Mammary epithelial cell (primary cell): ENCODE measurements at regions of chr14 and their contacts with region 1.

Region 1: DNA sequence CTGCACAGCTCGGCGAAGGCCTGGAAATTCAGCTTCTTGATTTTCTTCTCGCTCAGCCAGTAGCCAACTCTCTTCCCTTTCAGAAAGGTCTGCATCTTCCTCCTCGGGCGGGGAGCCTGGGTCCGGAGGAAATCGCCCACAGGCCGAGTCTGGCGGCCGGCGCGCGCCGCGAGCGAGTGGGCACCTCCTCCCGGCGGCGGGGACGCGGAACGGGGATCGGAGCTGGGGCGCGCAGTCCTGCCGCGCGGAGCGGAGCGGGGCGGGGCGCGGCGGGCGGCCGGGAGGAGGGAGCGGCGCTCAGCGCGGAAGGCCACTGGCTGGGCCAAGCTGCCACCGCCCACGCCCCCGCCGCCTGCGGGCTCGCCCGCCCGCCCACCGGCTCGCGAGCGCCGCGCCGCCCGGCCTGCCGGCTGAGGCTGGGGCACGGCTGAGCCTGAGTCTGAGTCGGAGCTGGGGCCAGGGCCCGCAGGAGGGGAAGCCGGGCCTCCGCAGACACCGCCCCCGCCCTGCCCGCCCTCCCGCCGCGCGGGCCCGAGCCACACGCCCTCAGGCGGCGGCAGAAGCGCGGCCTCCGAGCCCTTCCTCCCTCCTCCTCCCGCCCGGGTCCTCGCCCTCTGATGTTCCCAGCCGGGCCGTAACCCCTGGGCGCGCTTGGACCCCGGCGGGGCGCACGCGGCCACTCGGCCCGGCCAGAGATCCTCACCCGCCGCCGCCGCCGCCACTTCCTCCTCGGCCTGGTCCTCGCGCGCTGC is 480 bp downstream of the ITPK1 start:
- DNase-seq: peak; percentile 84
- H3K4me3 ChIP-seq: peak overlapping the region; percentile 62 to 99 (median 74)
- H3K27ac ChIP-seq: peak overlapping the region; percentile 4
- H3K4me1 ChIP-seq: peaks cover 21% of the 10 kb centered on the region
- H3K27me3 ChIP-seq: no peaks in the 10 kb centered on the region
- CTCF ChIP-seq: no peak

Region 2: DNA sequence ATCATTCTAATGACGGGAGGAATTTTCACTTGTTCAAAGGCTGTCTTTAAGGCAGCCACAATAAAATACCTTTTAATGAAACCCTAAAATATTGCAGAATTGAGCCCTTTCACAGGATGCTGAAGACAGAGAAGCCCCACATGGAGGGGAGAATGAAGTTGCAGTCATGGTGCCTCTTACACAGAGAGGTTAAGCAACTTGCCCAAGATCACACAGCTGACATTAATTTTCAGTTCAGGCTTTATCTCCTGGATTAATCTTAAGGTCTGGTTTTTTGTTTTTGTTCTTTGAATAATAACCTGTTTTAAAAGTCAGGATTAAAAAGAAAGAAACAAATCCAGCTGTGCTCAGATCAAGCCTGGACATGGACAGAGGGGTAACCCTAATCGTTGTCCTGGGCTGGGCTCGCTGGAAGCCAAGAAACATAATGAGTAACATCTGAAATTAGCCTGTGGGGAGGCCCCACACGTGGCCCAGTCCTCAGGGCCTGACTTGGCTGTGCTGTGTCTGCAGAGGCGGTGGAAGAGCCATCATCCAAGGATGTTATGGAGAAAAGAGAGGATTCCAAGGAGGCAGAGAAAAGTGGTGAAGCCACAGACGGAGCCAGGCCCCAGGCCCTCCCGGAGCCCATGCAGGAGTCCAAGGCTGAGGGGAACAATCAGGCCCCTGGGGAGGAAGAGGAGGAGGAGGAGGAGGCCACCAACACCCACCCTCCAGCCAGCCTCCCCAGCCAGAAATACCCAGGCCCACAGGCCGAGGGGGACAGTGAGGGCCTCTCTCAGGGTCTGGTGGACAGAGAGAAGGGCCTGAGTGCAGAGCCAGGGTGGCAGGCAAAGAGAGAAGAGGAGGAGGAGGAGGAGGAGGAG is 184.3 kb before region 1 on chr14:
- CTCF ChIA-PET with region 1: no interaction called
- dilution Hi-C with region 1: loop called (anchors 5 kb)
- in situ Hi-C with region 1: no loop called
- intact Hi-C with region 1: no loop called
- DNase-seq: peak; percentile 75
- H3K4me3 ChIP-seq: no peak overlapping the region
- H3K27ac ChIP-seq: no peak overlapping the region
- H3K4me1 ChIP-seq: peaks cover 33% of the 10 kb centered on the region
- H3K27me3 ChIP-seq: no peaks in the 10 kb centered on the region
- CTCF ChIP-seq: no peak

Region 3: DNA sequence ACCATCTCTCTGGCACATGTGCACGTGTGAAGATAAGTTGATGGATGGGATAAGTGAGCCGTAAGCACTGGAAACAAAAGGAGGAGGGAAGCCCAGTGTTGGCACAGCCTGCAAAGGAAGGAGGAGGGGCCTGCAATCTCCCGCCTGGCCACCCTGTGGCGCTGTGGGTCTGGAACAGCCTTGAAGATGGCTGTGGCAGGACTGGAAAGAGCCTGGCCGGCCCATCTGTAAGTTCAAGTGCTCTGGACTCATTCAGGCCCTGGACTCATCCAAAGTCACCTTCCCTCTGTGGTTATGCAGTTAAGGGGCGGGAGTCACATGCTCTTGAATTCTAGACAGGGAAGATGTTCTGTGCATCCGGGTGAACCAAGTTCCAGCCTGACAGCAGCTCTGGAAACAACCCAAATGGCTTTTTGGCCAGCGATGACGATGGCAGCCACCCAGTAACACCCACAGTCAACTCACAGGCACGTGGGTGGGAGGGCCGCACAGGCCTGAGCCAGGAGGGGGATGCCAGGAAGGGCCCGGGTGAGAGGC is 141.9 kb before region 1 on chr14:
- CTCF ChIA-PET with region 1: interaction called, 6 read pairs
- dilution Hi-C with region 1: no loop called
- in situ Hi-C with region 1: loop called in 1 of 2 experiments (anchors 25 kb)
- intact Hi-C with region 1: loop called (anchors 1 kb)
- DNase-seq: peak; percentile 29
- H3K4me3 ChIP-seq: no peak overlapping the region
- H3K27ac ChIP-seq: no peak overlapping the region
- H3K4me1 ChIP-seq: peaks cover 11% of the 10 kb centered on the region
- H3K27me3 ChIP-seq: no peaks in the 10 kb centered on the region
- CTCF ChIP-seq: peak; percentile 87 to 89

Region 4: DNA sequence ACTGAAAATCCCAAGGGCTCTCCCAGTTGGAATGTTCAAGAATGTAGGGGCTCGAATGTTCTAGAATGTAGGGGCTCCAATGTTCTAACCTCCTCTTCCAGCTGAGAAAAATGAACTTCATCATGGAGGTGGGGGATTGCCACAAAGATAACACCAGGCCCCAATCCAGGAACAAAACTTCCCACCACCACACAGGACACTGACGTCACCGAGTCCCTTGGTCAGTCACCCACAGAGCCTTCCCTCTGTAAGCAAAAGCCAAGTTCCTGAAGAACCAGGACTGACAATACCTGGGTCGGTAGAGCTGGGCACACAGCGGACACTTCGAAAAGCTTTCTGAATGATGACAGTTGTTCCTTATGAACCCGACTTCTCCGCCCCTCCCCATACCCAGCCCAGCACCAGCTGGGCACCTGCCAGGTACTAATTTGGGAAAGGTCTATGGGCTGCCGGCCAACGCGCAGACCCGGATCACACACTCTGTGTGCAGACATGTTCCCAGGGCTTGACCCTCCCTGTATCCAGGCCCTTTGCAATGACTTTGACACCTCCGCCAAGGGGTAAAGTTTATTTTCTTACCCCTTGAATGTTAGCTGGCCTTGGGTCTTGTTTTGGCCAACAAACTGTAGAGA is 18.4 kb before region 1 on chr14:
- CTCF ChIA-PET with region 1: interaction called, 11 read pairs
- dilution Hi-C with region 1: no loop called
- in situ Hi-C with region 1: no loop called
- intact Hi-C with region 1: no loop called
- DNase-seq: no peak
- H3K4me3 ChIP-seq: no peak overlapping the region
- H3K27ac ChIP-seq: no peak overlapping the region
- H3K4me1 ChIP-seq: peaks cover 27% of the 10 kb centered on the region
- H3K27me3 ChIP-seq: no peaks in the 10 kb centered on the region
- CTCF ChIP-seq: no peak

Region 5: DNA sequence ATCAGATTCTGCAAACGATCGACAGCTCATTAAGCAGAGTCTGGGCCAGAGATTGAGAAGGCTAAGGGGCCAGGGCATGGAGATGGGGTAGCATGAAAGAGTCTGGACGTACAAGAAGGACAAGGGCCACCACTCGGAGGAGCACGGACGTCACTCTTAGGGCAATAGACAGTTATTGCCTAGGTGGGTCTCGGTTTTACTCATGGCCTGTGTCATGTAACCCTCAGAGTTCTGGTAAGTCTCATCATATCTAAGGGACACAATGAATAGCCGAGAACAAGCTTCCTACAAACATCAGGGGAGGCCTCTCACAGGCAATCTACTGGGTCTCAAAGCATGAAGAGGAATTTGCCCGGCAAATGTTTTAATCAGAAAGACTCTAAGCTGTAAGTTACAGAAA is 30.9 kb after region 1 on chr14:
- CTCF ChIA-PET with region 1: no interaction called
- dilution Hi-C with region 1: no loop called
- in situ Hi-C with region 1: no loop called
- intact Hi-C with region 1: no loop called
- DNase-seq: no peak
- H3K4me3 ChIP-seq: no peak overlapping the region
- H3K27ac ChIP-seq: no peak overlapping the region
- H3K4me1 ChIP-seq: peaks cover 12% of the 10 kb centered on the region
- H3K27me3 ChIP-seq: no peaks in the 10 kb centered on the region
- CTCF ChIP-seq: no peak

Region 6: DNA sequence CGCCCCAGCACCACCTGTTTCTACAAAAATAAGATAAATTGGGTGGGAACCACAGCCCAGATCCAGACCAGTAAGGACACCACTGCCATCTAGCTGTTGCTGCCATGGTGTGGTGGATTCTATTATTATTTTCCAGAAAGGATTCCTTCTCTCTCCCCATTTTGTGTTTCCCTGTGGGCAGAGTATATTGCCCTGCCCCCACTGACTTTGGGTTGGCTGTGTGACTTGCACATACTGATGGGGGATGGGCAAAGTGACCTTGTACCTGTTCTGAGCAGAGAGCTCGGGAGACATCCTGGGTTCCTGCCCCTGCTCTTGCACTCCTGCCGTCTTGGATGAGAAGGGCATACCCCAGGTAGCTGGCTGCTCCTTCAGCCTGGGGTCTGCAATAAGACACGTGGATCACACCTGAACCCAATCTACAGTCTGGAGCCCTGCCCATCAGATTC is 45.1 kb after region 1 on chr14:
- CTCF ChIA-PET with region 1: interaction called, 34 read pairs
- dilution Hi-C with region 1: no loop called
- in situ Hi-C with region 1: no loop called
- intact Hi-C with region 1: loop called (anchors 1 kb)
- DNase-seq: no peak
- H3K4me3 ChIP-seq: no peak overlapping the region
- H3K27ac ChIP-seq: no peak overlapping the region
- H3K4me1 ChIP-seq: no peaks in the 10 kb centered on the region
- H3K27me3 ChIP-seq: no peaks in the 10 kb centered on the region
- CTCF ChIP-seq: peak; percentile 41 to 59

Region 7: DNA sequence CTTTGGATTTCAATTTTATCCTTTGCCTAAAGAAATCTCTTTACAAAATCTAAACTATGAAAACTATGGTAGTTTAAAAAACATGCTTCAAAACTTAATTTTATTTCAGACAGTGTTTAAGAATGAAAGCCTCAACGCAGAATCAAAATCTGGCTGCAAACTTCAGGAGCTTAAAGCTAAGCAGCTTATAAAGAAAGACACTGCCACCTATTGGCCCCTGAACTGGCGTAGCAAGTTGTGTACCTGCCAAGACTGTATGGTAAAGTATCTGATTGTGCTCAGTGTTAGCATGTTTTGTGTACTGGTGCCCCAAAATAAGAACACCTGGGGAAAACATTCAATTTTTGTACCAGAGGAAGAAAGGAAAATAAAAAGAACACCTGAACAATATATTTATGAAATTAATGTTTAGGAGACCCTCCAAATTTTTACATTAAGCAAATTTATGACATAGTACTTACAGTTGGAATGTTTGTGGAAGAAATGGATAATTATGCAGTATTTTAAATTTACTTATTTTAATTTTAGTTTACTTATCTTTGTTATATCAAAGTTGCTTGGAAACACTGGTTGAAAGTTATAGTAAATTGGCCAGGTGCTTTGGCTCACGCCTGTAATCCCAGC is 104.0 kb after region 1 on chr14:
- CTCF ChIA-PET with region 1: interaction called, 7 read pairs
- dilution Hi-C with region 1: no loop called
- in situ Hi-C with region 1: no loop called
- intact Hi-C with region 1: loop called (anchors 1 kb)
- DNase-seq: peak; percentile 51
- H3K4me3 ChIP-seq: no peak overlapping the region
- H3K27ac ChIP-seq: no peak overlapping the region
- H3K4me1 ChIP-seq: no peaks in the 10 kb centered on the region
- H3K27me3 ChIP-seq: no peaks in the 10 kb centered on the region
- CTCF ChIP-seq: peak; percentile 75 to 78

Region 8: DNA sequence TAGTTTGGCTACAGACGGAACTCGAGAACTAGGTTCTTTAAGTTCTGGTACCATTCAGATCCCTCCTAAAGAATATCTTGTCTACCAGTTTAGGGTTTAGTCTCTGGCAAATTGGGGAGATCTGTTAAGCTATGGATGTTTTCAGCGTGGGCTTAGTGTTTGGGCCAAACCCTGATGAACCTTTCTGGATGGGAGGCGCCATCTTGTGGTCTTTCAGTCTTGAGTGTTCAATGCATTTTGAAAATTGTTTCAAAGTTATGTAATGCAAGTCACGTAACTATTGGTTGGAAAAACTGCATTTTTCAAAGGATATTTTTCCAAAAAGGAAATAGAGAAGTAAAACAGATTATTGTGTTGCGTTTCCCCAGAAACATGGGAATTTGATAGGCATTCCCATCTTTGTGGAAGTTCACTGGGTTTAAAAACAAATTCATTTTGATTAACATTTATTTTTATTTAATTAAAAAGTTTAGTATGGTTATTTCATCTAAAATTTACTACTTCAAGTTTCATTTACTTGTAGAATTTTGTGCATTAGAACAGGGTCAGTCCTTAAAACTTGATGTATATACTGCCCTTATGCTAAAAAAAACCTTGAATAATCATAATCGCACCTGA is 504.0 kb after region 1 on chr14:
- CTCF ChIA-PET with region 1: no interaction called
- dilution Hi-C with region 1: no loop called
- in situ Hi-C with region 1: no loop called
- intact Hi-C with region 1: loop called (anchors 2 kb)
- DNase-seq: peak; percentile 14
- H3K4me3 ChIP-seq: no peak overlapping the region
- H3K27ac ChIP-seq: no peak overlapping the region
- H3K4me1 ChIP-seq: no peaks in the 10 kb centered on the region
- H3K27me3 ChIP-seq: no peaks in the 10 kb centered on the region
- CTCF ChIP-seq: peak; percentile 58 to 71